ENCODE measurements at regions of chr16 and their contacts with region 1.

Region 1: GRCh38 chr16:78705694-78706093 is 606.2 kb downstream of the WWOX start:
- DNase-seq: peak in 1 of 2 donors; percentile 67
- ATAC-seq: peak; percentile 49 to 53 (median 52)
- H3K4me3 ChIP-seq: no peak overlapping the region
- H3K4me3 Mint-ChIP-seq: no peak overlapping the region
- H3K27ac ChIP-seq: no peak overlapping the region
- H3K27ac Mint-ChIP-seq: no peak overlapping the region
- H3K4me1 ChIP-seq: no peaks in the 10 kb centered on the region
- H3K4me1 Mint-ChIP-seq: peaks cover 5 to 8% of the 10 kb centered on the region in 2 donors
- H3K27me3 ChIP-seq: no peaks in the 10 kb centered on the region
- H3K27me3 Mint-ChIP-seq: peaks cover 3 to 10% of the 10 kb centered on the region in 2 donors
- CTCF ChIP-seq: peak; percentile 59

Region 2: DNA sequence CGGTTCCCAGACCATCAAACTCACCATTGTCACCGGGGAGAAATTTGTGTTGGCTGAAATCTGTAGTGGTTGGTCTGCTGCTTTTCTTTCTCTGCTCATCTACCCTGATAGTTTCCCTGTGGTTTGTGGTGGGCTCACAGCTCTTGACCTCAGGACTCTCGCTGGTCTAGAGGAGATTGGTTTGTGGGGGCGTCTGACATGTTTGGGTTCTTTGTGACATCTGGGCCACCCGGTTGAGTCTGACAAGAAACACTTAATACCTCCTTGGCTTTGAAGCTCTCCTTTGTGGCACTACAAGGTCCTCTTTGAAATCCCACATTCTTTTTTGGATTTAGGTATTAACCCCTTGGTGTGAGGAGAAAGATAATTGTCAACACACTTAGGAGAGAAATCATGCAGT is 55.7 kb after region 1 on chr16:
- intact Hi-C with region 1: loop called (anchors 5 kb)
- DNase-seq: peak; percentile 26 to 28
- ATAC-seq: peak; percentile 59 to 97 (median 71)
- H3K4me3 ChIP-seq: no peak overlapping the region
- H3K4me3 Mint-ChIP-seq: no peak overlapping the region
- H3K27ac ChIP-seq: no peak overlapping the region
- H3K27ac Mint-ChIP-seq: no peak overlapping the region
- H3K4me1 ChIP-seq: peaks cover 22% of the 10 kb centered on the region
- H3K4me1 Mint-ChIP-seq: peaks cover 4 to 17% of the 10 kb centered on the region in 2 donors
- H3K27me3 ChIP-seq: peaks cover 27% of the 10 kb centered on the region
- H3K27me3 Mint-ChIP-seq: peaks cover 48 to 71% of the 10 kb centered on the region in 2 donors
- CTCF ChIP-seq: no peak

Region 3: GRCh38 chr16:80084685-80085084 is 1379.0 kb after region 1 on chr16:
- intact Hi-C with region 1: loop called (anchors 5 kb)
- DNase-seq: peak; percentile 16 to 38
- ATAC-seq: peak; percentile 46 to 75 (median 59)
- H3K4me3 ChIP-seq: no peak overlapping the region
- H3K4me3 Mint-ChIP-seq: no peak overlapping the region
- H3K27ac ChIP-seq: no peak overlapping the region
- H3K27ac Mint-ChIP-seq: no peak overlapping the region
- H3K4me1 ChIP-seq: no peaks in the 10 kb centered on the region
- H3K4me1 Mint-ChIP-seq: no peaks in the 10 kb centered on the region
- H3K27me3 ChIP-seq: no peaks in the 10 kb centered on the region
- H3K27me3 Mint-ChIP-seq: peaks cover 0 to 3% of the 10 kb centered on the region in 2 donors
- CTCF ChIP-seq: peak; percentile 42